Prostate gland (tissue), 2 donors: ENCODE measurements at regions of chr16 and their contacts with region 1.

Region 1: DNA sequence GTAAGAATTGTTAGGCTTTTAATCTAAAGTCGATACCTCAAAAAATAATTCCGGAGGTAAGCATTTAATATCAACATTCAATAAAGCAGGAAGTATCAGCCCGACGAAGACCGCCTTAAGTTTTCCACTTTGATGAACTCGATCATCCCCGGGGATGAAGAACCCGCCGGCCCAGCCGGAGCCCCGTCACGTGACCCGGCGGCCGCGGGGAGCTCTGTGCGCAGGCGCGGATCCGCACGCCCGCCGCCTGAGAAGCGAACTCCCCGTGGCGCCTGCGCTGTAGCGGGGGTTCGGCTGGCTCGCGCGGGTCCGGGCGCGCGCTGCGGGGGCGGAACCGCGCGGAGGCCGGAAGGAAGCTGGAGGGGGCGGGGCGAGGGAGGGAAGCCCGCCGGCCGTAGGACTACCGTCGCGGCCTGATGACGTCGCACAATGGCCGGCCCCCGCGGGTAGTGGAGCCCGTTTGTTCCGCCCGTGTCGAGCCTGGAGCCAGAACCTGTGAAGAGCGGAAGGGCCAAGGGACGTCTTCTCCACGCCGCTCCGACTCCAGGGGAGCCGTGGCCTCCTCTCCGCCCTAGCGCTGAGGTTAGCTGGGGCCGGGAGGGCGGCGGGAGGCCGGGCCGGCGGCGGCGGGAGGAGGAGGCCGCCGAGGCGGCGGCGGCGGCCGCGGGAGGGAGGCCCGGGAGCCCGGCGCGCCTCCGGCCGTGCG is at the start of gene ZC3H18:
- DNase-seq: peak; percentile 96
- H3K4me3 ChIP-seq: peak within 1 kb of the TSS; percentile 85 to 86
- H3K27ac ChIP-seq: peak within 1 kb of the TSS; percentile 58 to 68
- H3K4me1 ChIP-seq: peaks cover 8% of the 10 kb centered on the region
- H3K27me3 ChIP-seq: no peaks in the 10 kb centered on the region
- CTCF ChIP-seq: peak in 2 of 4 experiments; percentile 18 to 25
- POLR2A ChIP-seq: peak; percentile 51
- total RNA-seq, gene ZC3H18: 26.7 to 50.7 TPM

Region 2: DNA sequence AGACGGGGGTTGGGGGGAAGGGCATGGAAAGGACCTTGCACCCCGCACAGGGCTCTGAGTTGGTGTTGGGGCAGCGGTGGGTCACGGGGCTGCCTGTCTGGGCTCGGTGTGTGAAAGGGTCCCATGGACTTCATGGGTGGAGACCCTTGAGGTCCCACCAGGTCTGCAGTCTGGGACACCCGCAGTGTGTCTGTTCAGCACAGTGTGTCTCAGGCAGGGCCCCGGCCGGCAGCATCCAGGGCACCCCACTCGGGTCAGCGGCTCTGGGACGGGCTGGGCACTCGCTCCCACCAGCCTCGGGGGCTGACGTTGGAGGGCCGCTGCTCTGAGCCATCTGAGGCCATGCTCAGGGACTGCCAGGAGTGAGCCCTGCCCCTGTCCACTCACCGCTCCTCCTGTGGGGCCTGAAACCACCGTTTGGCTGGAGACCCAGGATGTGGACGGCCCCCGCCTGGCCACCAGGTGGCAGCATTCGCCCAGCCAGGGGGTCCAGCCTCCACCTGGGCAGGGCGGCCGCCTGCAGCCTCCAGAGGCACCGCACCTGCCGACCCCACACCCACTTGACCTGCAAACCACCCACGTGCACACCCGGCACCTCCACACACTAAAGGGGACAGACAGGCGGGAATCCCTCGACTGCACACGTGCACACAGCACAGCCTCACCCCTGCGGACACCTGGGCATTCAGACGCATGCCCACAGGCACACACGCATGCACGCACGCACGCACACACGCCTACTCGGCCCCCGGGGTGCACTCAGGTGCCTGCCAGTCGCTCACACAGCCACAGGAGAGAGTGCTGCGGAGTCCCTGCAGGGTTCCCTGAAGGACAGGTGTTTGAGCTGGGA is 127.2 kb before region 1 on chr16:
- intact Hi-C with region 1: loop called (anchors 10 kb)
- DNase-seq: peak; percentile 65
- H3K4me3 ChIP-seq: no peak overlapping the region
- H3K27ac ChIP-seq: no peak overlapping the region
- H3K4me1 ChIP-seq: no peaks in the 10 kb centered on the region
- H3K27me3 ChIP-seq: no peaks in the 10 kb centered on the region
- CTCF ChIP-seq: peak; percentile 87 to 99 (median 98)
- POLR2A ChIP-seq: no peak

Region 3: GRCh38 chr16:88610080-88610479 is 39.9 kb after region 1 on chr16:
- intact Hi-C with region 1: no loop called
- DNase-seq: no peak
- H3K4me3 ChIP-seq: no peak overlapping the region
- H3K27ac ChIP-seq: no peak overlapping the region
- H3K4me1 ChIP-seq: no peaks in the 10 kb centered on the region
- H3K27me3 ChIP-seq: no peaks in the 10 kb centered on the region
- CTCF ChIP-seq: no peak
- POLR2A ChIP-seq: no peak

Region 4: DNA sequence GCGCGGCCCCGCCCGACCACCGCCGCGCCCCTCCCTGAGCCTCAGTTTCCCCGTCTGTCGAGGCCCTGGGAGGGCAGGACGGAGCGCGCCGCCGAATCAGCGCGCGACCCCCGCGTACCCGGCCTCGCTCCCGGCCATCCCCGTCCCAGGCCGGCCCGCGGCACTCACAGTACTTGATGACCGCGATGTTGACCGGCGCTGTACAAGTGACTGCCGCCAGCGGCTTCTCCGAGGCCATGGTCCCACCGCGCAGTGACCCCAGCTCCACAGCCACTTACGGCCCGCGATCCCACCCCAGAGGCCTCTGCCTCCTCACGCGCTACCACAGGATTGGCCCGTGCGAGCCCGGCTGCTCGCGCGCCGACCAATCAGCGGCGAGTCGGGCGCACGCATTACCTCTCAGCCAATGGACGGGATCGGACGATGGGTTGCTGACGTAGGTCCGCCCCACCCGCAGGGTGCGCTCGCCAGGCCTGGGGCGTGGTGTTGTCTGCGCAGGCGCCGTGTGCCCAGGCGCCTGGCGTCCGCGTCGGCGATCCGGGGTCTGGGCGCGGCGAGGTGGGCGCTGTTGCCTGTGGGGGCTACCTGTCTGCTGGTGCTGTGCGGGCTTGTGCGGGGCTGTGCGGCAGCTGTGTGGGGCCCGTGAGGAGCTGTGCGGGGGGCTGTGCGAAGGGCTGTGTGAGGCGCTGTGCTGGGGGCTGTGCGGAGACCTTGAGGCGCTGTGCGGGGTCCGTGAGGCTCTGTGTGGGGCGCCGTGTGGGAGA is 92.9 kb after region 1 on chr16 and contains the start of gene MVD:
- intact Hi-C with region 1: loop called (anchors 2 kb)
- DNase-seq: peak; percentile 97
- H3K4me3 ChIP-seq: peak within 1 kb of the TSS; percentile 67 to 91
- H3K27ac ChIP-seq: peak within 1 kb of the TSS; percentile 71 to 88
- H3K4me1 ChIP-seq: no peaks in the 10 kb centered on the region
- H3K27me3 ChIP-seq: no peaks in the 10 kb centered on the region
- CTCF ChIP-seq: peak in 1 of 4 experiments; percentile 17
- POLR2A ChIP-seq: peak; percentile 89
- total RNA-seq, gene MVD: 34.7 to 40.0 TPM